ENCODE measurements at regions of chr1 and their contacts with region 1.

Region 1: GRCh38 chr1:217453816-217454215 is 177.1 kb downstream of the GPATCH2 start:
- DNase-seq: peak in 1 of 2 donors; percentile 74
- ATAC-seq: peak; percentile 88 to 99 (median 96)
- H3K4me3 ChIP-seq: no peak overlapping the region
- H3K27ac ChIP-seq: peak overlapping the region; percentile 46 to 82 (median 70)
- H3K4me1 ChIP-seq: peaks cover 0 to 24% (median 0%) of the 10 kb centered on the region in 9 donors
- H3K27me3 ChIP-seq: no peaks in the 10 kb centered on the region
- CTCF ChIP-seq: peak in 1 of 9 donors; percentile 22

Region 2: GRCh38 chr1:217528271-217528670 is 74.5 kb after region 1 on chr1:
- intact Hi-C with region 1: loop called in 2 of 10 experiments (anchors 10 kb)
- DNase-seq: no peak
- ATAC-seq: no peak
- H3K4me3 ChIP-seq: no peak overlapping the region
- H3K27ac ChIP-seq: no peak overlapping the region
- H3K4me1 ChIP-seq: peaks cover 0 to 18% (median 5%) of the 10 kb centered on the region in 9 donors
- H3K27me3 ChIP-seq: no peaks in the 10 kb centered on the region
- CTCF ChIP-seq: no peak

Region 3: GRCh38 chr1:217989510-217989909 is 535.7 kb after region 1 on chr1:
- intact Hi-C with region 1: no loop called
- DNase-seq: no peak
- ATAC-seq: no peak
- H3K4me3 ChIP-seq: no peak overlapping the region
- H3K27ac ChIP-seq: no peak overlapping the region
- H3K4me1 ChIP-seq: no peaks in the 10 kb centered on the region
- H3K27me3 ChIP-seq: no peaks in the 10 kb centered on the region
- CTCF ChIP-seq: no peak